Ovary (tissue), 10 donors: ENCODE measurements at regions of chr2 and their contacts with region 1.

Region 1: GRCh38 chr2:73828818-73829570 is at the start of gene STAMBP:
- DNase-seq: peak; percentile 96 to 98 (median 97)
- H3K4me3 ChIP-seq: peak within 1 kb of the TSS; percentile 83
- H3K27ac ChIP-seq: peak within 1 kb of the TSS; percentile 56 to 96
- H3K4me1 ChIP-seq: peaks cover 9% of the 10 kb centered on the region
- H3K27me3 ChIP-seq: no peaks in the 10 kb centered on the region
- CTCF ChIP-seq: peak in 1 of 3 donors; percentile 11
- EP300 ChIP-seq: no peak
- POLR2A ChIP-seq: peak; percentile 83
- total RNA-seq, gene STAMBP: 17.0 to 34.2 (median 28.1) TPM

Region 2: GRCh38 chr2:73926493-73927338 is 97.7 kb after region 1 on chr2 and contains the start of gene DGUOK:
- intact Hi-C with region 1: loop called in 1 of 4 experiments (anchors 10 kb)
- DNase-seq: peak; percentile 96 to 99 (median 97)
- H3K4me3 ChIP-seq: peak within 1 kb of the TSS; percentile 61
- H3K27ac ChIP-seq: peak within 1 kb of the TSS; percentile 83 to 94
- H3K4me1 ChIP-seq: peaks cover 3% of the 10 kb centered on the region
- H3K27me3 ChIP-seq: no peaks in the 10 kb centered on the region
- CTCF ChIP-seq: peak in 1 of 3 donors; percentile 4
- EP300 ChIP-seq: peak; percentile 68
- POLR2A ChIP-seq: peak; percentile 97
- total RNA-seq, gene DGUOK: 45.8 to 66.2 (median 52.4) TPM